ENCODE measurements at regions of chr2 and their contacts with region 1.

Region 1: DNA sequence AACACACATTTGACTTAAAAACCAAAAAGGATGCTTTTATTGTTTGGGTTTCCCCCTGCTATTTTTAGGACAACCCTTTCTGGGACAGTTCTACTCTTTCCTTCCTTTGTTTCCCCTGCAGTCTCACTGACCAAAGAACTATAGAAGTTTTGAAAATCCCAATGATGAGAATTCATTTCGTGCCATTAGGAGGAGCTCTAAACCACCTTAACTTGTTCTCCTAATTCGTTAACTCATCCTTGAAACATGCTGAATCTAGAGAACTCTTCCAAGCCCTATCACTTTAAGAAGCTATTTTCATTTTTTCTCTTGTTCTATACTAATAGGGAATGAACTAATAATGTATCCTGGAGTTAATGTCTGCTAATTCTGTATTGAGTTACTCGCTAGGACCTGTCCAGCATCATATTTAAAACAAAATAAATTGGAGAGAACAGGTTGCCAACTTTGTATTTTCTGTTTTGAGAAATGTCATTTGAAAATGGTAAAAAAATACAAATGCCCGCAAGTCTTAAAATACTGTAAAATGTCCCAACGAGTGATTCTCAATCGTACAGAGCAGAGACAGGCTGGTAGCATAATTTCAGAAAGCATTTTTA is 62.9 kb downstream of the AFTPH start:
- DNase-seq: peak; percentile 69
- H3K4me3 ChIP-seq: no peak overlapping the region
- H3K27ac ChIP-seq: no peak overlapping the region
- H3K4me1 ChIP-seq: peaks cover 8% of the 10 kb centered on the region
- H3K27me3 ChIP-seq: no peaks in the 10 kb centered on the region
- CTCF ChIP-seq: peak; percentile 35 to 54
- POLR2A ChIP-seq: no peak

Region 2: DNA sequence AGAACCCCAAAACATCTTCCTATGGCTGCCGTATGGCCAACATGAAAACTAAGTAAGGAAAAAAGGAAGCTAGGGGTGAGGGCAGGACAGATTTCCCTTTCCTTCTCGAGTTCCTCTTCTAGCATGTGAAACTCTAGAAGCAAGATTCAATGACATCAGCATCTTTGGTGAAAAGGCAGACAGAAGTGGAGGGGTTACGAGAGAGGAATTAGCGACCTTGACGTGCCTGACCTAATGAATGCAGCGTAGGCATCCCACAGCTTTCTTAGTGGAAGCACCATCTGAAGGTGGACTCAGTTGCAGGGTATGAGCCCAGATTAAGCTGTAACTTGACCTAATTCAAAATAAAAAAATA is 394.9 kb before region 1 on chr2:
- CTCF ChIA-PET with region 1: no interaction called
- POLR2A ChIA-PET with region 1: no interaction called
- dilution Hi-C with region 1: no loop called
- intact Hi-C with region 1: no loop called
- DNase-seq: no peak
- H3K4me3 ChIP-seq: no peak overlapping the region
- H3K27ac ChIP-seq: no peak overlapping the region
- H3K4me1 ChIP-seq: no peaks in the 10 kb centered on the region
- H3K27me3 ChIP-seq: peaks cover 0 to 2% of the 10 kb centered on the region in 2 experiments
- CTCF ChIP-seq: no peak
- POLR2A ChIP-seq: no peak

Region 3: GRCh38 chr2:64404002-64404731 is 182.8 kb before region 1 on chr2:
- CTCF ChIA-PET with region 1: no interaction called
- POLR2A ChIA-PET with region 1: no interaction called
- dilution Hi-C with region 1: no loop called
- intact Hi-C with region 1: no loop called
- DNase-seq: peak; percentile 99
- H3K4me3 ChIP-seq: peak overlapping the region in 1 of 3 experiments; percentile 26
- H3K27ac ChIP-seq: peak overlapping the region; percentile 72
- H3K4me1 ChIP-seq: peaks cover 35% of the 10 kb centered on the region
- H3K27me3 ChIP-seq: peaks cover 7 to 17% of the 10 kb centered on the region in 2 experiments
- CTCF ChIP-seq: no peak
- POLR2A ChIP-seq: no peak

Region 4: GRCh38 chr2:64491426-64491825 is 95.6 kb before region 1 on chr2:
- CTCF ChIA-PET with region 1: no interaction called
- POLR2A ChIA-PET with region 1: no interaction called
- dilution Hi-C with region 1: no loop called
- intact Hi-C with region 1: no loop called
- DNase-seq: no peak
- H3K4me3 ChIP-seq: no peak overlapping the region
- H3K27ac ChIP-seq: no peak overlapping the region
- H3K4me1 ChIP-seq: peaks cover 31% of the 10 kb centered on the region
- H3K27me3 ChIP-seq: peaks cover 4 to 8% of the 10 kb centered on the region in 2 experiments
- CTCF ChIP-seq: no peak
- POLR2A ChIP-seq: no peak

Region 5: DNA sequence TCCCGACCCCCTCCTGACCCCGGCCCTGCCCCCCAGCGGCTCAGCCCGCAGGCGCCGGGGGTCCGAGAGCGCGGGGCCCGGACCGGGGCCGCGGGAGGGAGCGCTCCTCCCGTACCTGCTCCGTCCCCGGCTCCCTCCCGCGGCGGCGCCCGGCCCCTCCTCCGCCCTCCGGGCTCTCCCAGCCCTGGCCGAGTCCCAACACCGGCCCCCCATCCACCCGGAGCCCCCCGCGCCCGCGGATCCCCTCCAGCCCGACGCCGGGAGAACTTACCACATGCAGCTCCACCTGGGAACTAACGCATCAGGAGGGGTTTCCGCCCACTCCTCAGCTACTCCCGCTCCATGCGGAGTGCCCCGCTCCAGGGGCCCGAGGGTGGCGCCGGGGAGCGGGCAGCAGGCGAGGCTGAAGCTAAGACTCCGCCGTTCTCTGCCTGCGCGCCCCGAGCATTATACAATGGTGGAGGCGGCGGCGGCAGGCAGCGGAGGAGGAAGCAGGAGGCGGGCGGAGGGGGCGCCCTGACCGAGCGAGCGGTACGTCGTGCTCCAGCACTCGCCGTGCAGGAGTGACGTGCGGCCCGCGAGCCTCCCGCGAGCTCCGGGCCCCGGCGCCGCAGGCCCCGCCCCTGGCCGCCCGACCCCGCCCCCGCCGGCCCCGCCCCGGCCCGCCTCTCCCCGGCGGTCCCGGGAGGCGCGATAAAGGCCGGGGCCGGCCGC is 66.5 kb after region 1 on chr2 and contains the start of gene SERTAD2:
- CTCF ChIA-PET with region 1: interaction called, 12 read pairs
- POLR2A ChIA-PET with region 1: interaction called, 3 read pairs
- dilution Hi-C with region 1: no loop called
- intact Hi-C with region 1: no loop called
- DNase-seq: peak; percentile 87
- H3K4me3 ChIP-seq: peak within 1 kb of the TSS; percentile 72 to 89 (median 83)
- H3K27ac ChIP-seq: peak within 1 kb of the TSS; percentile 91
- H3K4me1 ChIP-seq: peaks cover 21% of the 10 kb centered on the region
- H3K27me3 ChIP-seq: no peaks in the 10 kb centered on the region
- CTCF ChIP-seq: peak in 1 of 2 donors; percentile 14
- POLR2A ChIP-seq: peak; percentile 63
- total RNA-seq, gene SERTAD2: 11.2 and 12.0 TPM in 2 replicates

Region 6: GRCh38 chr2:64865073-64865830 is 278.3 kb after region 1 on chr2:
- CTCF ChIA-PET with region 1: interaction called, 26 read pairs
- POLR2A ChIA-PET with region 1: no interaction called
- dilution Hi-C with region 1: no loop called
- intact Hi-C with region 1: loop called (anchors 1 kb)
- DNase-seq: peak; percentile 71
- H3K4me3 ChIP-seq: peak overlapping the region; percentile 42 to 46 (median 44)
- H3K27ac ChIP-seq: peak overlapping the region; percentile 66
- H3K4me1 ChIP-seq: peaks cover 6% of the 10 kb centered on the region
- H3K27me3 ChIP-seq: no peaks in the 10 kb centered on the region
- CTCF ChIP-seq: peak; percentile 43 to 94
- POLR2A ChIP-seq: no peak

Region 7: DNA sequence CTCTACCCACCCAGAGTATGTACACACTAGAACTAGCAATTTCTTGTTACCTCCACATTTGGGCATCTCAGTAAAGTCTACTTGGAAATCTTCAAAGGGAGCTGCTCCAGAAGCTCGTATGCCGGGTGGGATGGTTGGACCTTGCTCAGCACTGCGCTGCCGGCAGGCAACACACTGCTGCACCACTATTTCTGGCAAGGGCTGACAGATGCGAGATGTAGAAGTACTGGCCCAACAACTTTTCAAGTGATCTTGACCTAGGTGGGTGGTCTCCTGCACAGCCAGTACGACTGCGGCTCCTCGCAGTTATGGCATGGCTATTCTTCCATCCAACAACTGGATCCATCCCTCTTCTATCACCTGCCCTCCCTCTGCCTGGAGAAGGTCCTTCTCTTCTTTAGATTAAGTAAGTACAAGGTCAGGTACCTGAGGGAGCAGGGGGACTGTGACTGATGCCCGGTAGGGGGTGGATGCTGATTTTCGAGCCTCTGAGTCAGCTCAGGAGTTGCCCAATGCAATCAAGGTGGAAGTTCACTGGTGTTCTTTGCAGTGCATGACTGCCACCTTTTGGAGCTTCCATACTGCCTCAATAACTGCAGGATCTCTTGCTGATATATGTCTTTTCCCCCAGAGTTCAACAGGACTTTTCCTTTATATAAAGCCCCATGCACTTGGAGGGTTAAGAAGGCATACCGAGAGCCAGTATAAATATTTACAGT is 301.8 kb after region 1 on chr2:
- CTCF ChIA-PET with region 1: interaction called, 12 read pairs
- POLR2A ChIA-PET with region 1: no interaction called
- dilution Hi-C with region 1: no loop called
- intact Hi-C with region 1: no loop called
- DNase-seq: peak; percentile 25
- H3K4me3 ChIP-seq: no peak overlapping the region
- H3K27ac ChIP-seq: no peak overlapping the region
- H3K4me1 ChIP-seq: no peaks in the 10 kb centered on the region
- H3K27me3 ChIP-seq: peaks cover 0 to 2% of the 10 kb centered on the region in 2 experiments
- CTCF ChIP-seq: peak in 1 of 2 donors; percentile 17
- POLR2A ChIP-seq: no peak

Measured in endothelial cell of umbilical vein (primary cell).